ENCODE measurements at regions of chr5 and their contacts with region 1.

Region 1: GRCh38 chr5:149828161-149828884 is 98.2 kb downstream of the PPARGC1B start:
- DNase-seq: peak; percentile 79
- ATAC-seq: peak; percentile 84
- H3K4me3 ChIP-seq: no peak overlapping the region
- H3K27ac ChIP-seq: no peak overlapping the region
- H3K4me1 ChIP-seq: peaks cover 8% of the 10 kb centered on the region
- H3K27me3 ChIP-seq: no peaks in the 10 kb centered on the region
- CTCF ChIP-seq: peak; percentile 78 to 89 (median 83)
- EP300 ChIP-seq: no peak
- POLR2A ChIP-seq: no peak
- RAD21 ChIP-seq: peak; percentile 95

Region 2: GRCh38 chr5:149636851-149637246 is 191.5 kb before region 1 on chr5:
- CTCF ChIA-PET with region 1: interaction called, 165 read pairs
- POLR2A ChIA-PET with region 1: interaction called, 3 read pairs
- RAD21 ChIA-PET with region 1: interaction called, 148 read pairs
- SMC1A ChIA-PET with region 1: interaction called, 51 read pairs
- in situ Hi-C with region 1: loop called (anchors 5 kb)
- intact Hi-C with region 1: loop called (anchors 1 kb)
- DNase-seq: no peak
- ATAC-seq: peak; percentile 85
- H3K4me3 ChIP-seq: no peak overlapping the region
- H3K27ac ChIP-seq: no peak overlapping the region
- H3K4me1 ChIP-seq: peaks cover 12% of the 10 kb centered on the region
- H3K27me3 ChIP-seq: no peaks in the 10 kb centered on the region
- CTCF ChIP-seq: peak; percentile 74 to 78 (median 77)
- EP300 ChIP-seq: no peak
- POLR2A ChIP-seq: no peak
- RAD21 ChIP-seq: peak; percentile 87

Region 3: GRCh38 chr5:149656576-149657182 is 171.6 kb before region 1 on chr5:
- CTCF ChIA-PET with region 1: interaction called, 349 read pairs
- POLR2A ChIA-PET with region 1: no interaction called
- RAD21 ChIA-PET with region 1: interaction called, 45 read pairs
- SMC1A ChIA-PET with region 1: interaction called, 210 read pairs
- in situ Hi-C with region 1: loop called (anchors 5 kb)
- intact Hi-C with region 1: loop called (anchors 1 kb)
- DNase-seq: no peak
- ATAC-seq: peak; percentile 73
- H3K4me3 ChIP-seq: no peak overlapping the region
- H3K27ac ChIP-seq: no peak overlapping the region
- H3K4me1 ChIP-seq: no peaks in the 10 kb centered on the region
- H3K27me3 ChIP-seq: no peaks in the 10 kb centered on the region; a peak in 1 of 4 replicates
- CTCF ChIP-seq: peak; percentile 72 to 83 (median 76)
- EP300 ChIP-seq: no peak
- POLR2A ChIP-seq: no peak
- RAD21 ChIP-seq: peak; percentile 69

Region 4: DNA sequence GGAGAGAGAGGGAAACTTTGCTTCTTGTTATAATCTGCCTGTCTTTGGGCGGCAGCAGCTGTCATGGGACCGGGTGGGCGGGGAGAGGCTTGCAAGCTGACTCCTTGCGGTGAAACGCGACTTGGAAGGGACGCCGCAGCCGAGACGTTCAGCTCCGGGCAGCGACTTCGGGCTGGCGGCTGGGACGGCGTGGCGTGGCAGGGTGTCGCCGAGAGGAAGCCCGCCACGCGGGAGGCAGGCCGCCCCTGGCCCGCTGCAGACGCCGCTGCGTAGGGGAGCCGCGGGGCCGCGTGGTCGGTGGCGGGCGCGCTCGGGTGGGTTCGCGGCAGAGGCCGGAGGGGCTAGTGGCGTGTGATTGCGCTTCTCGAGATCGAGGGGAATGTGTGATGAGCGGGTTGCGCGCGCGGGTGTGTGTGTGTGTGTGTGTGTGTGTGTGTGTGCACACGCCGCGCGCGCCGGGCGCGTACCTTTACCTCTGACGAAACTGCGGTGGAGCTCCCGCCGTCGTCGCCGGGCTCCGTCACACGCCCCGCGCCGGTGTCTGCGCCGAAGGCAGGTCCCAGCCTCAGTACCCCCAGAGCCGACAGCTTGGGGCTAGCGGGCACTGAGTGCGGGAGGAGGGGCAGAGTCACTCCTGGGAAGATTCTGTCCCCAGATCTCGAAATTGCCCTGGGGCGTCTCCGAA is 96.5 kb before region 1 on chr5:
- CTCF ChIA-PET with region 1: interaction called, 35 read pairs
- POLR2A ChIA-PET with region 1: interaction called, 5 read pairs
- RAD21 ChIA-PET with region 1: interaction called, 12 read pairs
- SMC1A ChIA-PET with region 1: interaction called, 25 read pairs
- in situ Hi-C with region 1: no loop called
- intact Hi-C with region 1: loop called (anchors 2 kb)
- DNase-seq: peak; percentile 62
- ATAC-seq: peak; percentile 77
- H3K4me3 ChIP-seq: peak overlapping the region; percentile 100
- H3K27ac ChIP-seq: peak overlapping the region; percentile 82
- H3K4me1 ChIP-seq: no peaks in the 10 kb centered on the region; the same call in 1 of the 2 replicates
- H3K27me3 ChIP-seq: no peaks in the 10 kb centered on the region
- CTCF ChIP-seq: no peak
- EP300 ChIP-seq: no peak
- POLR2A ChIP-seq: peak; percentile 77
- RAD21 ChIP-seq: no peak

Region 5: DNA sequence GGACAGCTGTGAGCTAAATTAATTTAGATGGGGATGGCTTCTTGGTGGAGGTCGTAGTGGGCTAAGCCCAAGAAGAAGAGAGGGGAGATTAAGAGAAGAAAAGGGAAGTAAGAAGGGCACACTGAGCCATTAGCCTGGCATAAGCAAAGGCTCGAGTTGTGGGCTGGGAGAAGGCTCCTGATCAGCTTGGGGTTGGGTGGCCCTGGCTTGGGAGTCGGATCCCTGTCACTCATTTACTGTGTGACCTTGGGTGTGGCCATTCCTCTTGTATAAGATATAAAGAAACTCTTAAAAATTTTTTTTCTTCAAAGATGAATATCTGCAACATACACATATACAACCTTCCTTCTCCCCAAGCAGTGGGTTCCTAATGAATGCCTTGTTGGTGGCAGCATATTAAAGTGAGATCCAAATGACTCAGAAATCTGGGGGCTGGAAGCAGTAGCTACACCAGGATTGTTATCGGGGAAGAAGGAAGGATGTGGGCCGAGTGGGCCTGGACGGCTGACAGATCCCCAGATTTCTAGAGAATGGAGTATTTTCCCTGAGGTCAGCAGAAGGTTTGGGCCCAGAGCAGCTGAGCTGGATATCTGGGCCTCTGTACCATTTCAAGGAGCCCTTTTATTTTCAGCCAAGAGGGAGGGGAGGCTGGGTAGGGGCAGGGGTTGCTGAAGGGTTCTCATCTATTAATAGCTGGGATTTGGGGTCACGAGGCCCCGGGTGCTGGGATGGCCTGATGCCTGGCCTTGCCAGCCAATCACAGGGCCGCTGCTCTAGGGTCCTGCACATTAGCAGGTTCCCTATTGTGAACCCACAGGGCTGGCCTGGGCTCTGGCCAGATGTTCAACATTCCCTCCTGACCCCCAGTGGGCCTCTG is 46.1 kb before region 1 on chr5:
- CTCF ChIA-PET with region 1: interaction called, 130 read pairs
- POLR2A ChIA-PET with region 1: interaction called, 11 read pairs
- RAD21 ChIA-PET with region 1: interaction called, 70 read pairs
- SMC1A ChIA-PET with region 1: interaction called, 88 read pairs
- in situ Hi-C with region 1: no loop called
- intact Hi-C with region 1: no loop called
- DNase-seq: no peak
- ATAC-seq: no peak
- H3K4me3 ChIP-seq: no peak overlapping the region
- H3K27ac ChIP-seq: peak overlapping the region; percentile 13; the same call in 1 of the 2 replicates
- H3K4me1 ChIP-seq: peaks cover 48% of the 10 kb centered on the region
- H3K27me3 ChIP-seq: no peaks in the 10 kb centered on the region
- CTCF ChIP-seq: no peak
- EP300 ChIP-seq: no peak
- POLR2A ChIP-seq: no peak
- RAD21 ChIP-seq: no peak

Region 6: DNA sequence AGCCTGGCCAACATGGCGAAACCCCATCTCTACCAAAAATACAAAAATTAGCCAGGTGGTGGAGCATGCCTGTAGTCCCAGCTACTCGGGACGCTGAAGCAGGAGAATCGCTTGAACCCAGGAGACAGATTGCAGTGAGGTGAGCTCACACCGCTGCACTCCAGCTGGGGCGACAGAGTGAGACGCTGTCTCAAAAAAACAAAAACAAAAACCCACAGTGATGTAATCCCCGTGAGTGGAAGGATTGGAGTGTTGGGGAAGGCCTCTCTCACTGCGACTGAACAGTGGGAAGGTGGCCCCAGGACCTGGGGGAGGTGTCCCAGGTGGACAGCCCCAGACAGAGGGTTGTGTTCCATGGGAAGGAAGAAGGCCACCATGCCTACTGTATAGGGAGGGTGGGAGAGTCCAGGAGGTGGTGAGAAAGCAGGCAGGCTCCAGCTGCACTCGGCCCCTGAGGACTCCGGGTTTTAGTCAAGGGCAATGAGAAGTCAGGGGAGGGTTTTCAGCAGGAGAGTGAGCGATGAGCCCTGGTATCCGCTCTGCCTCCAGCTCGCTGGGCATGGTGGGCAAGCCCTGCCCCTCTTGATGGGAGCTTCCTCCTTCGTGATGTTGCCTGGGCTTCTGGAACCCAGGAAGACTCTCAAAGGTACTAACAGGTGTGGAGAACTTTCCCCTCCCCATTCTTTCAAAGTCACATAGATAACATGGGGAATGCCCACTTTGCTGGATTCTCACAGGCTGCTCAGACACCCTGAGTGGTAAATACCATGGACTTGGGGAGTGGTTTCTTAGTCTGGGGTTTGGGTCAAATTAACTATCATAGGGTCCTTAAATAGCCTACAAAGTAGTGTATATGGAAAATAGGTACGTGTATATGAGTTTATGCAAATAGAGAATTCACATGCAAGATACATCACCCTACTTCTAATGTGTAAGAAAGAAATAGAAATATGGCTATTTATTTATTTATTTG is 23.6 kb before region 1 on chr5:
- CTCF ChIA-PET with region 1: interaction called, 55 read pairs
- POLR2A ChIA-PET with region 1: interaction called, 70 read pairs
- RAD21 ChIA-PET with region 1: interaction called, 139 read pairs
- SMC1A ChIA-PET with region 1: interaction called, 52 read pairs
- in situ Hi-C with region 1: no loop called
- intact Hi-C with region 1: loop called (anchors 1 kb)
- DNase-seq: peak; percentile 92
- ATAC-seq: peak; percentile 72
- H3K4me3 ChIP-seq: no peak overlapping the region
- H3K27ac ChIP-seq: peak overlapping the region; percentile 99
- H3K4me1 ChIP-seq: peaks cover 60% of the 10 kb centered on the region
- H3K27me3 ChIP-seq: no peaks in the 10 kb centered on the region
- CTCF ChIP-seq: no peak
- EP300 ChIP-seq: peak; percentile 34 to 45; a peak in 2 of 4 replicates
- POLR2A ChIP-seq: peak; percentile 59
- RAD21 ChIP-seq: peak; percentile 20; the same call in 1 of the 2 replicates

Region 7: DNA sequence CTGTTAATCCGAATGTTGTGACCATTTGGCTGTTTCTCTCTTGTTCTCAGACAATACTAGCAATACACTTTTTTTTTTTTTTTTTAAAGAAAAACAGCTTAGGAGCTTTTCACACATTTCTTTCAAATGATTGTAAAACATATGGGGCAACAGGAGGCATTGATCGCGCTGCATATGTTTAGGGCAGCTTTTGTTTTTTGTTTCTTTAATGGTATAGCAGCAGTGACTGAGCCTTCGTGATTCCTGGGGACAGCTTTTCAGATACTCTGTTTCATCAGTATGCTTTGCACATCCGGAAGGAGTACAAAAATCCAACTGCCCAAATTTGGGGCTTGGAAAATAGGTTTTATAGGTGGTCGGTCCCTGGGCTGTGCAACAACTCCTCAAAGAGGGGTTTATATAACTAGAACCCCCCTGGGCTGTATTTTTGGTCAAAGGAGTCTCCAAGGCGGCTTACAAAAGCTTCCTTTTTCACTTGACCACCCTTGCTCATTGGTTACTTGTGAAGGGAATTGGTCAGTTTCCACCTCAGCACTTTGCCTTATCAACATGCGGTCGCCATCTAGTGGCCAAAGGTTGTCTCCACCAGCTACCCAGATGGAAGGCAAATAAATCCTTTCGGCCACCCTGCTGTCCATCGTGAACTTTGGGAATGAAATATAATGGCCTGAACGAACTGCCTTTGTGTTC is 24.5 kb after region 1 on chr5:
- CTCF ChIA-PET with region 1: interaction called, 462 read pairs
- POLR2A ChIA-PET with region 1: interaction called, 7 read pairs
- RAD21 ChIA-PET with region 1: interaction called, 137 read pairs
- SMC1A ChIA-PET with region 1: interaction called, 81 read pairs
- in situ Hi-C with region 1: no loop called
- intact Hi-C with region 1: no loop called
- DNase-seq: no peak
- ATAC-seq: peak; percentile 96
- H3K4me3 ChIP-seq: no peak overlapping the region
- H3K27ac ChIP-seq: no peak overlapping the region
- H3K4me1 ChIP-seq: no peaks in the 10 kb centered on the region
- H3K27me3 ChIP-seq: no peaks in the 10 kb centered on the region
- CTCF ChIP-seq: peak; percentile 83 to 93 (median 87)
- EP300 ChIP-seq: no peak
- POLR2A ChIP-seq: no peak
- RAD21 ChIP-seq: peak; percentile 83

Region 8: GRCh38 chr5:150175076-150175935 is 347.0 kb after region 1 on chr5:
- CTCF ChIA-PET with region 1: no interaction called
- POLR2A ChIA-PET with region 1: no interaction called
- RAD21 ChIA-PET with region 1: no interaction called
- SMC1A ChIA-PET with region 1: no interaction called
- in situ Hi-C with region 1: no loop called
- intact Hi-C with region 1: no loop called
- DNase-seq: no peak
- ATAC-seq: peak; percentile 84
- H3K4me3 ChIP-seq: no peak overlapping the region
- H3K27ac ChIP-seq: no peak overlapping the region
- H3K4me1 ChIP-seq: no peaks in the 10 kb centered on the region
- H3K27me3 ChIP-seq: no peaks in the 10 kb centered on the region; a peak in 1 of 4 replicates
- CTCF ChIP-seq: peak; percentile 33 to 62 (median 42); a peak in 5 of 6 replicates
- EP300 ChIP-seq: no peak
- POLR2A ChIP-seq: no peak
- RAD21 ChIP-seq: no peak

Measured in GM12878 (cell line).